RWPE1 (cell line): ENCODE measurements at regions of chr17 and their contacts with region 1.

Region 1: DNA sequence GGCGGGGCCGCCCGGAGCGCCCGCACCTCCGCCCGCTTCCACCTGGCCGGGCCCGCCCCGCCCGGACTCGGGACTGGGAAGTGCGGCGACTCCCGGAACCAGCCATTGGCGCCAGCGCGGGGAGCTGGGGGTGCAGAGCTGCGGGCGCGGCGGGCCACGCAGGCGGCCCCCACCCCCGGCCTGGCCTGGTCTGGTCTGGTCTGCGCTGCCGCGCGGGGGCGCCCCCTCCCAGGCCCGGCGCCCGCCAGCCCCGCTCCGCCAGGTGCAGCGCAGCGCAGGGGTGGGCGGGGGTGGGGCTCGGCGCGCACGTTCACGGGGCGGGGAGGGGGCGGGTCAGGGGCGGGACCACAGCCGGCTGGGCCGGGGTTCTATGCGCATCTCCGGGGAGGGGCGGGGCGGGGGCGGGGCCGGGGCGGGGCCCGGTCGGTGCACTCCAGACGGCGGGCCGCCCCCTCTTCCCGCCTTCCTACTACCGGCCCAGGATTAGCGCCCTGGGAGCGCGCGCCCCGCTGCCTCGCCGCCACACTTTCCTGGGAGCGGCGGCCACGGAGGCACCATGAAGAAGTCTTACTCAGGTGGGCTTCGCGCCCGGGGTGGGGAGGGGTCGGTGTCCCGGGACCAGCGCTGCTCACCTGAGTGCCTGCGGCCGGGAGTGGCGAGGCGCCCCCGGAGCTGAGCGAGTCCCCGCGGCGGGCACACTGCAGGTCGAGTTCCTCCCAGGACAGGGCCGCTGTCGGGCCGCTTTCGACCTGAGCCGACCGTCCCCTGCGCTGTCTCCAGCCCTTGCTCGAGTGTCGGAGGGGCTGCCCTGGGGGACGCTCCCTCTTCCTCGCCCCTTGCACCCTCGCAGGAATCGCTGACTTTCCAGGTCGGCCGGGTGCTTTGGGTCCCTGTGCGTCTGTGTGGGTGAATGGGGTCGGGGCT is 140.5 kb downstream of the SEC14L1 start:
- DNase-seq: peak; percentile 89
- H3K27ac ChIP-seq: peak overlapping the region; percentile 100
- CTCF ChIP-seq: peak; percentile 76

Region 2: DNA sequence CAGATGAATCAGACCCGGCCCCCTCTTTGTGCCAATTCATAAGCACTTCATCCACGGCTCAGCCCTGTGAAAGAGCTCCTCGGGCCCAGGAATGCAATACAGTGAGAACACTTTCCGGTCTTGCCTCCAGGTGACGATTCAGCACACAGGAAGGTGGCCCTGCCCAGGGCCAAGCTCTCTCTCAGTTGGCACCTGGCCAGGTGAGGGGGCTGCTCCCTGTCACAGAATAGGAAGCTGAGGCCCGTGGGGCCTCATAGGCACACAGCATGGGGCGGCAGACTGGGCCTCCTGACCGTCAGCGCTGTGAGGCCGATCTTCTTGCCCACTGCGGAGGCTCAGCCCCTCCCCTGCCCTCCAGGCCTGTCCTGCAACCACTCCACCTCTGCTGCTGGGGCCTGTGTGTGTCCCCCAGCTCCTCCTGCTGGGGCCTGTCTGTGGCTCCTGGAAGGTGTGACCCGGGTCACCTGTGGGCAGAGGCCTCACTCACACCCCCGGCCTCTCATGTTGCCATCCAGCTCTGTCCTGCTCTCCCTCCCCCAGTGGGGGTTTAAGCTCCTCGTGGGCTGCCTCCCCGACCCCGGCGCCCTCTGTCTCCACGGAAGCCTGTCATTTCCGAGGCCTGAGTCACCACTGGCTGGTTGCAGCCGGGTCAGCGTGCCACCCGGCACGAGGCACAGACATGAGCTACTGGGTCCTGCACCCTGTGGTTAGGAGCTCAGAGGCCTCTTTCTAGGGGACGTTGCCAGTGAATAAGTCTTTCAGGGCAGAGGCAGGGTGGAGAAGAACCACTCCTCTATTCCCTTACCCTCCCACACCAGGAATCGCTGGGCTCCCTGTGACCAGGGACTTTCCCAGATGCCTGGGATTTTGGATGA is 26.1 kb before region 1 on chr17:
- CTCF ChIA-PET with region 1: interaction called, 12 read pairs
- POLR2A ChIA-PET with region 1: interaction called, 24 read pairs
- DNase-seq: peak; percentile 92
- H3K27ac ChIP-seq: peak overlapping the region; percentile 99
- CTCF ChIP-seq: no peak

Region 3: DNA sequence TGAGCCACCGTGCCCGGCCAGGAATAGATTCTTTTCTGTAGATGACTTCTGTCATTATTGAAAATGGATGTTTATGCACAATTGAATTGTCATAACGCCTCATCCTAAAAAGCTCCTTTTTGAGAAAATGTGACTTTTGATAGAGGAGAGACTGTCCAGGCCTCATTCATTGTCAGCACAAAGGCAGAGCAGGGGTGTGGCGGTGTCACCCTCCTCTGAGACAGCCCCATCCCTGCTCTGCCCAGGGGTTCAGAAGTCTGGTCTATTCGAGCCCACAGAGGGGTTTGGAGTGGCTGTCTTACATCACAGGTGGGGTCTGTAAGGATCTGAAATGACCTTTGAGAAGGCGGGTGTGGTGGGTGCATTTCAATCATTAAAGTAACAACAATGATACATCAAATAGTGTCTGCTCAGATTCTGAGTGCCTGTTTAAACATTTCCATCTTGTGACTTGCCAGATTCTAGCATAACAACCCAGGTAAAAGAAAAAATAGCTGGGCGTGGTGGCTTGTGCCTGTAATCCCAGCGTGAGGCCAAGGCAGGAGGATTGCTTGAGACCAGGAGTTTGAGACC is 20.5 kb after region 1 on chr17:
- CTCF ChIA-PET with region 1: no interaction called
- POLR2A ChIA-PET with region 1: no interaction called
- DNase-seq: no peak
- H3K27ac ChIP-seq: peak overlapping the region; percentile 84
- CTCF ChIP-seq: no peak

Region 4: DNA sequence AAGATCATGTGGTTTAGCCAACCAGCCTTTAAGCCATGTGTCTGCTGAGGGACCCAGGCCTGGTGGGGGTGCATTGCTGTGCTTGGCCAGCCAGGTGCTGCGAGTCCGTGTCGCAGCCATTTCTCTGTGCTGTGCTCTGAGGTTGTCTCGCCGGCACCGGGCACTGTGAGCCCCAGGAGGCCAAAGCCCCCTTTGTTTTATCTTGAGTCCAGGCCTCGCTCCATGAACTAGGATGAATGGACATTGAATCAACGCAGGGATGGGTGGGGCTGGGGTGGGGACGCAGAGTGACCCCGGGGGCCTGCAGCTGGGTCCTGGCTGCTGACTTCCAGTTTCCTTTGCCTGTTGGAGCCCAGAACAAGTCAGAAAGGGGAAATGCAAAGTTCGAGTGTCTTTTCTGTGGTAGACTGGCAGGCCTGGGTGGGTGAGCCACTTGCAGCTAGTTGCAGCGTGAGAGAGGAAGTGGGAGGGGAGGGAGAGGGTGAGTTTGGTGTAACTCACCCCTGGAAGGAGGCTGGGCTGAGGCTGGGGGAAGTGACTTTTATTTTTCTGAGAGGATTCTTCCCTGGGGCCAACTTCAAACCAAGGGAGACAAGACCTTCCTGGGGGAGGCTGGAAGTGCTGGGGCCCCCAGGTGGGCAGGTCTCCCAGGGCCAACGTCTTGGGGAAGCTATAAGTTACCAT is 184.3 kb after region 1 on chr17:
- CTCF ChIA-PET with region 1: no interaction called
- POLR2A ChIA-PET with region 1: no interaction called
- DNase-seq: no peak
- H3K27ac ChIP-seq: peak overlapping the region; percentile 89
- CTCF ChIP-seq: no peak